Activated naive CD4-positive, alpha-beta T cell treated with anti-CD3 and anti-CD28 coated beads for 36 hours (primary cell): ENCODE measurements at regions of chr3 and their contacts with region 1.

Region 1: GRCh38 chr3:4493014-4493940 is at the start of gene ITPR1:
- DNase-seq: peak; percentile 98
- H3K4me3 Mint-ChIP-seq: peak within 1 kb of the TSS; percentile 87
- H3K27ac Mint-ChIP-seq: peak within 1 kb of the TSS; percentile 83
- H3K4me1 Mint-ChIP-seq: peaks cover 37% of the 10 kb centered on the region
- H3K27me3 Mint-ChIP-seq: peaks cover 4% of the 10 kb centered on the region
- total RNA-seq, gene ITPR1: 38.5 to 41.1 TPM

Region 2: GRCh38 chr3:4207672-4208071 is 285.6 kb before region 1 on chr3:
- CTCF ChIA-PET with region 1: no interaction called
- intact Hi-C with region 1: no loop called
- DNase-seq: no peak
- H3K4me3 Mint-ChIP-seq: no peak overlapping the region
- H3K27ac Mint-ChIP-seq: no peak overlapping the region
- H3K4me1 Mint-ChIP-seq: no peaks in the 10 kb centered on the region
- H3K27me3 Mint-ChIP-seq: no peaks in the 10 kb centered on the region

Region 3: GRCh38 chr3:4387210-4388204 is 105.8 kb before region 1 on chr3:
- CTCF ChIA-PET with region 1: interaction called, 6 read pairs
- intact Hi-C with region 1: loop called (anchors 1 kb)
- DNase-seq: no peak
- H3K4me3 Mint-ChIP-seq: no peak overlapping the region
- H3K27ac Mint-ChIP-seq: peak overlapping the region; percentile 39
- H3K4me1 Mint-ChIP-seq: peaks cover 26% of the 10 kb centered on the region
- H3K27me3 Mint-ChIP-seq: no peaks in the 10 kb centered on the region

Region 4: GRCh38 chr3:4474683-4475490 is 18.4 kb before region 1 on chr3:
- CTCF ChIA-PET with region 1: interaction called, 4 read pairs
- intact Hi-C with region 1: loop called (anchors 1 kb)
- DNase-seq: peak; percentile 54
- H3K4me3 Mint-ChIP-seq: no peak overlapping the region
- H3K27ac Mint-ChIP-seq: no peak overlapping the region
- H3K4me1 Mint-ChIP-seq: peaks cover 9% of the 10 kb centered on the region
- H3K27me3 Mint-ChIP-seq: peaks cover 10% of the 10 kb centered on the region

Region 5: DNA sequence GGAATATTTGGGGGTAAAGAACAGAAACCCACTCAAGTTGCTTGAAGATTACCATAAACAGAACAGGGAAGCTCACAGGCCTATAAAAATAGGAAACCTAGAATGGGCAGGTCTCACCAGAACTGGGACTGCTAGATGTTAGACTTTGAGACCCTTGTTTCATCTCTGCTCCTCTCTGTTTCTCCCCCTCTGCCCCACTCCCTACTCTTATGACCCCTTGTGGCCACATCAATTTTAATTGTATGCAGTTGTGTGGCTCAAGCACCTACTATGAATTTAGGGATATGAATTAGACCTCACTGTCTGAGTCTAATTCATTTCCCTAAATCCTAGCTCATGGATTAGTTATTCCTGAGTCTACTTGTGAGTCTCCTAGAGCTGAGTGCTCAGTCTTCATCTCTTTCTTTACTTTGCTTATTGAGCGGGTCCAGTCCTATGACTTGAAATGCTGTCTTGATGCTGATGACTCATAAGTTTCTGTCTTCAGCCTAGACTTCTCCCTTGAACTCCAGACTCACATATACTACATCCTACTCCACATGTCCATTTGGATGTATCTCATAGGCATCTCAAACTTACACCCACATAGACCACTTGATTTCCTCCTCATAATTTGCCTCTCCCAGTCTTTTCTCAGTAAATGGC is 78.5 kb after region 1 on chr3:
- CTCF ChIA-PET with region 1: interaction called, 11 read pairs
- intact Hi-C with region 1: no loop called
- DNase-seq: no peak
- H3K4me3 Mint-ChIP-seq: no peak overlapping the region
- H3K27ac Mint-ChIP-seq: no peak overlapping the region
- H3K4me1 Mint-ChIP-seq: peaks cover 8% of the 10 kb centered on the region
- H3K27me3 Mint-ChIP-seq: no peaks in the 10 kb centered on the region

Region 6: DNA sequence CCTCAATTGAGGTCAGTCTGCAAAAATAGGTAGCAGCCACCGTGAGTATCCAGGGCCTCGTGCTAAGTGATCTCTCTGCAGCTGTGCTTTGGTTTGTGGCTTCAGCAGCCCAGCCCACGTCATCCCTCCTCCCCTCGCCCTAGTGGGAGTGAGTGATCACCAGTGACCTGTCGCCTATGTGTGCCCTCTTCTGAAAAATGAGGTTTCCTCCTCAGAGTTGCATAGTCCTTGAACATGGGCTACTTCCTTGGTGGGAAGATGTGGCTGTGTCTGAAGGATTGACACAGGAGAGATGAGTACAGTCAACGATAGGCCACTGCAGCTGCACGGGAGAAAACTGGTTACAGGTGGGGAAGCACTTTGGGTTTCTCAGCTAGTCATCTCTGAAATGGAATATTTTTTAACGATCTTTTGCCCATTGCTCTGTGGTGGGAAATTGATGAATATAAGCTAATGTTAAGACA is 341.2 kb after region 1 on chr3:
- CTCF ChIA-PET with region 1: no interaction called
- intact Hi-C with region 1: loop called (anchors 5 kb)
- DNase-seq: peak; percentile 84
- H3K4me3 Mint-ChIP-seq: peak overlapping the region; percentile 13
- H3K27ac Mint-ChIP-seq: peak overlapping the region; percentile 93
- H3K4me1 Mint-ChIP-seq: peaks cover 85% of the 10 kb centered on the region
- H3K27me3 Mint-ChIP-seq: no peaks in the 10 kb centered on the region

Region 7: GRCh38 chr3:5187156-5187919 is 694.1 kb after region 1 on chr3 and contains the start of gene EDEM1:
- CTCF ChIA-PET with region 1: interaction called, 3 read pairs
- intact Hi-C with region 1: loop called (anchors 2 kb)
- DNase-seq: peak; percentile 95
- H3K4me3 Mint-ChIP-seq: peak within 1 kb of the TSS; percentile 96
- H3K27ac Mint-ChIP-seq: peak within 1 kb of the TSS; percentile 99
- H3K4me1 Mint-ChIP-seq: peaks cover 27% of the 10 kb centered on the region
- H3K27me3 Mint-ChIP-seq: no peaks in the 10 kb centered on the region
- total RNA-seq, gene EDEM1: 137 to 138 TPM